Astrocyte of the spinal cord (primary cell): ENCODE measurements at regions of chr1 and their contacts with region 1.

Region 1: DNA sequence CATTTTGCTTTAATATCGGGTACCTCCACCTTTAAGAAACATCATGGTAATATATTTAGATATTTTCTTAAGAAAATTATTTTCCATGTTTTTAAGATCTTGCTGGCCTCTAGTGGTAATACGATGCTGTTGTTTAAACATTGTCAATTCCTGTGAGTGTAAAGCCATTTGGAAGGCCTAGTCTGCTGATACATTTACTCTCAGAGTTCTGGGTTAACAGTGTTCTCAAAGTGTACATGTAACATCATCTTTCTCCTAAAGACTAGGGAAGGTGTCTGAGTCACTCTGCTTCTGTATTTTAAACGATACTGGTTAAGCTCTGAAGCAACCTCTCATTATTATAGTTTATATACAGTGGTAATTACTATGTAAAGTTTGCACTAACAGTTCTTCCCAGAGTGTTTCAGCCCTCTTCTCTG is 189.1 kb downstream of the RASAL2 start:
- DNase-seq: peak; percentile 82
- H3K4me3 ChIP-seq: no peak overlapping the region
- CTCF ChIP-seq: peak; percentile 59

Region 2: GRCh38 chr1:177945943-177946650 is 336.9 kb before region 1 on chr1:
- in situ Hi-C with region 1: no loop called
- DNase-seq: peak; percentile 66
- H3K4me3 ChIP-seq: no peak overlapping the region
- CTCF ChIP-seq: peak; percentile 82

Region 3: DNA sequence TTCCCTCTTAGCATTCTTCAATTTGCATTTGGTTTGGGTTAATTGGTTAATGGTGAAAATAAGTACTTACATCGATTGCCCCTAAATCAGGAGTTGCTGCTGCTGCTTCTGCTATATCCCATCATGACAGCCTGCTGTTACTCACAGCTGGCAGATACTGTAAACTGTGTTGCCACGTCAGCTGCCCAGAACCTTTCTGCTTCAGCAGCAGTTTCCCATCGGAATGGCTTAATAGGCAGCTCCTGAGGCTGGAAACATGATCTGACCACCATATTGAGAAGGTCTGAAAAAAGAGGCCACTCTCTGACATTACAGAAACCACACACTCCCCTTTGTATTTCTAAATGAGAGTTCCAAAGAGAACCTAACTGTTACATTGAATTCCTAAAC is 298.8 kb before region 1 on chr1:
- in situ Hi-C with region 1: loop called (anchors 25 kb)
- DNase-seq: peak; percentile 95
- H3K4me3 ChIP-seq: peak overlapping the region; percentile 22
- CTCF ChIP-seq: no peak

Region 4: DNA sequence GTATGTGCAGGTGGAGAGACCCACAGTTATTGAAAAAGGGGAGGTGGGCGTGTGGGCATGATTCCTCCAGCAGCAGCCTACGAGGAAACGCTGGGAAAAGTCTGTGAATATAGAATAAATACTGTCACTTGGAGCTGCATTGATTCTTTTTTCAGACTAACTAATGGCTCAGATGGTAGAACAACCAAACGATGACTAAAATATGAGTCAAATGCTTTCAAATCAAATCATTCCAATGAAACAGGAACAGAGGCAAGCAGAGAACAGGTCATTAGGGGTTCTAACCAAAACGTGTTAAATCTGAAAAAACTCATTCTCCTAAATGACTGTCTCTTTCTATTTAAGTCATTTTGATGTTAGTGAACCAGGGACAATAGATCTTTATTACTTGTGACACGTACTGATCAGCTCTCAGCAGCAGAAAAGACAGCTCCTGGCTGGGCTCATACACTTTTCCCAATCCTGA is 278.0 kb before region 1 on chr1:
- in situ Hi-C with region 1: no loop called
- DNase-seq: peak; percentile 53
- H3K4me3 ChIP-seq: no peak overlapping the region
- CTCF ChIP-seq: no peak